ENCODE measurements at regions of chr6 and their contacts with region 1.

Region 1: GRCh38 chr6:136846046-136846445 is 23.7 kb downstream of the PEX7 start:
- DNase-seq: peak; percentile 29
- H3K4me3 ChIP-seq: no peak overlapping the region
- H3K27ac ChIP-seq: no peak overlapping the region
- H3K4me1 ChIP-seq: no peaks in the 10 kb centered on the region
- H3K27me3 ChIP-seq: no peaks in the 10 kb centered on the region
- CTCF ChIP-seq: peak; percentile 80 to 81

Region 2: GRCh38 chr6:137013738-137014602 is 167.9 kb after region 1 on chr6:
- CTCF ChIA-PET with region 1: interaction called, 4 read pairs
- dilution Hi-C with region 1: no loop called
- in situ Hi-C with region 1: no loop called
- intact Hi-C with region 1: loop called (anchors 2 kb)
- DNase-seq: peak; percentile 71
- H3K4me3 ChIP-seq: no peak overlapping the region
- H3K27ac ChIP-seq: no peak overlapping the region
- H3K4me1 ChIP-seq: peaks cover 13% of the 10 kb centered on the region
- H3K27me3 ChIP-seq: peaks cover 4% of the 10 kb centered on the region
- CTCF ChIP-seq: peak; percentile 66 to 85

Region 3: GRCh38 chr6:137025786-137026456 is 179.9 kb after region 1 on chr6:
- CTCF ChIA-PET with region 1: interaction called, 5 read pairs
- dilution Hi-C with region 1: no loop called
- in situ Hi-C with region 1: loop called in 1 of 2 experiments (anchors 10 kb)
- intact Hi-C with region 1: no loop called
- DNase-seq: peak; percentile 44
- H3K4me3 ChIP-seq: no peak overlapping the region
- H3K27ac ChIP-seq: no peak overlapping the region
- H3K4me1 ChIP-seq: peaks cover 7% of the 10 kb centered on the region
- H3K27me3 ChIP-seq: peaks cover 9% of the 10 kb centered on the region
- CTCF ChIP-seq: no peak

Measured in mammary epithelial cell (primary cell).